Aorta (tissue), 5 donors: ENCODE measurements at regions of chr4 and their contacts with region 1.

Region 1: GRCh38 chr4:127782274-127783025 is at the start of gene HSPA4L:
- DNase-seq: peak in 1 of 2 donors; percentile 69
- ATAC-seq: peak; percentile 98
- H3K4me3 ChIP-seq: peak within 1 kb of the TSS; percentile 55 to 82
- H3K27ac ChIP-seq: peak within 1 kb of the TSS; percentile 24 to 37
- H3K4me1 ChIP-seq: peaks cover 0 to 3% of the 10 kb centered on the region in 2 donors
- H3K27me3 ChIP-seq: no peaks in the 10 kb centered on the region
- total RNA-seq, gene HSPA4L: 12.6 to 17.7 TPM

Region 2: DNA sequence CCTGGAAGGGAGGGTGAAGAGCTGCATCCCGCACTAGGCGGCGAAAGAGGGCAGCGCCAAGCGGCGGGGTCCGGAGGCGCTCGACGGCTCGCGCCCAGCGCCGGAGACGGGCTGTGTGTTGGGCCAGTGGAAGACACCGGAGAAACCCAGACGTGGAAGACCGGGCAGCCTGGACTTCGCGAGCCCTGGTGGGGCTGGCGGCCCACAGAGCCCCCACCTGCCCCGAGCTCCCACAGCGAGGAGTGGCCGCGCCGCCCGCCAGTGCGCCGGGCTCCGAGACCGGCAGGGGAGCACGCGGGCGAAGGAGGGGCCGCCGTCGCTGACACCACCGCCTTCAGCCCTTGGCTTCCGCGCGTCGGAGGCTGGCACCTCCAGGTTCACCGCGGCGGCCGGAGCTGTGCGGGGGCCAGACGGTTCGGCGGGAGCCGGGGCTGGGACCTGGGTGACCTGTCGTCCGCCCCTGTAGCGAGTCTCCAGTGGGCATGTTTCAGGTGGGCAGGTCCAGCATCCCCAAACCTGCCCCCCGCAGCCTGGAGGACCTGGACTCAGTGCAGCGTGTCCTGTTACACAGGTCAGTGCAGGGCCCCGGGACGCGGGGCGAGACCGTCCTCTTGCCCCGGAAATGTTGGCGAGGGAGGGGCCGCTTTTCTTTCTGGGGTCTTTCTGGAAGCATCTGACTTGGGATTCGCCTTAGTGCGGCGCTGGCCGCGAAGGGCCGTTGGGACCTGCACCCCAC is 159.4 kb before region 1 on chr4:
- intact Hi-C with region 1: loop called in 1 of 2 experiments (anchors 10 kb)
- DNase-seq: peak; percentile 57 to 89
- ATAC-seq: peak; percentile 85
- H3K4me3 ChIP-seq: peak overlapping the region; percentile 35 to 91
- H3K27ac ChIP-seq: no peak overlapping the region
- H3K4me1 ChIP-seq: no peaks in the 10 kb centered on the region
- H3K27me3 ChIP-seq: no peaks in the 10 kb centered on the region

Region 3: DNA sequence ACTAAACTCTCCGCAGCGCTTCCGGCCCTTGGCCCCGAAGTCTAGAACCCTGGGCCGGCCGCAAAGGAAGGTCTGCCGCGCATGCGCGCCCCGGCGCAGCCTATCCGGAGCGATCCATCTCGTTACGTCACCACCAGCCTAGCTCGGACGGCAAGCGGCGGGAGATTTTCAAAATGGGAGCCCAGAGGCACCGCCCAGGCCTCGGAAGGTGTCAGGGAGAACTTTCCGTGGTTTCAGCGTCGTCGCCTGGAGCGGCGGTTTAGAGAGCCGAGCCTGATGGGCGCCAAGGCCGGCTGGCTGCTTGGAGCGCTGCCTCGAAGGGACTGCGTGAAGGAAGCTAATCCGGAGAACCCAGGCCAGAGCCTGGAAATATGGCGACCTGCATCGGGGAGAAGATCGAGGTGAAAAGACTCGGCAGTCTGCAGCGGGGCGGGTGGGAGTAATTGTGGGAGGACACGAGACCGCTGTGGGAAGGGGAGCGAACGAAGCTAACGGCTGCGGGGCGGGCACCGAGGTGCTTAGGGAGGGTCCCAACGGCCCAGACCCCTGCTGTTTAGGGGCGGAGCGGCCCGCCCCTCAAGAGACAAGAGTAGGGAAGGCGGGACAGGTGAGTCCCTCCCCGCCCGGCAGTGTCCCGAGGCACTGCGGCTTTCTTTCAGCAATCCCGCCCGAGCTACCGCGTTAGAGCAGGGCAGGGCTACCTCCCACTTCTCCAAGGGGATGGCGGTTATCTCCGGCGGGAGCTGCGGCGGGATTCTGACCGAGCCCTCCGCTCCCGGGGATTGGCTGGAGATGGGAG is 98.5 kb after region 1 on chr4 and contains the start of gene PLK4:
- intact Hi-C with region 1: loop called in 1 of 2 experiments (anchors 2 kb)
- DNase-seq: peak; percentile 98
- ATAC-seq: peak; percentile 98
- H3K4me3 ChIP-seq: peak within 1 kb of the TSS; percentile 50 to 52
- H3K27ac ChIP-seq: no peak within 1 kb of the TSS
- H3K4me1 ChIP-seq: no peaks in the 10 kb centered on the region
- H3K27me3 ChIP-seq: no peaks in the 10 kb centered on the region
- total RNA-seq, gene PLK4: 0.96 to 1.3 TPM

Region 4: GRCh38 chr4:127965062-127965802 is 182.8 kb after region 1 on chr4 and contains the starts of genes ABHD18 and MFSD8:
- intact Hi-C with region 1: loop called in 1 of 2 experiments (anchors 10 kb)
- DNase-seq: peak; percentile 100
- ATAC-seq: peak; percentile 100
- H3K4me3 ChIP-seq: peak within 1 kb of the TSS; percentile 60 to 85
- H3K27ac ChIP-seq: peak within 1 kb of the TSS in 1 of 2 donors; percentile 49
- H3K4me1 ChIP-seq: peaks cover 0 to 2% of the 10 kb centered on the region in 2 donors
- H3K27me3 ChIP-seq: no peaks in the 10 kb centered on the region
- total RNA-seq, gene ABHD18: 13.4 to 14.7 TPM
- total RNA-seq, gene MFSD8: 25.8 to 29.3 TPM

Region 5: GRCh38 chr4:128060699-128061565 is 278.5 kb after region 1 on chr4 and contains the start of gene LARP1B:
- intact Hi-C with region 1: loop called in 1 of 2 experiments (anchors 5 kb)
- DNase-seq: peak; percentile 98 to 99
- ATAC-seq: peak; percentile 98
- H3K4me3 ChIP-seq: peak within 1 kb of the TSS; percentile 86
- H3K27ac ChIP-seq: peak within 1 kb of the TSS; percentile 93 to 94
- H3K4me1 ChIP-seq: peaks cover 0 to 3% of the 10 kb centered on the region in 2 donors
- H3K27me3 ChIP-seq: no peaks in the 10 kb centered on the region
- total RNA-seq, gene LARP1B: 21.4 to 23.9 TPM